Psoas muscle (tissue), 8 donors: ENCODE measurements at regions of chr16 and their contacts with region 1.

Region 1: GRCh38 chr16:85821441-85822135 is 22.1 kb downstream of the COX4I1 start:
- DNase-seq: peak; percentile 66 to 86
- ATAC-seq: peak; percentile 76 to 90 (median 87)
- H3K4me3 ChIP-seq: no peak overlapping the region
- H3K27ac ChIP-seq: no peak overlapping the region
- H3K4me1 ChIP-seq: no peaks in the 10 kb centered on the region
- H3K27me3 ChIP-seq: peaks cover 0 to 36% (median 6%) of the 10 kb centered on the region in 3 donors
- CTCF ChIP-seq: peak; percentile 96

Region 2: DNA sequence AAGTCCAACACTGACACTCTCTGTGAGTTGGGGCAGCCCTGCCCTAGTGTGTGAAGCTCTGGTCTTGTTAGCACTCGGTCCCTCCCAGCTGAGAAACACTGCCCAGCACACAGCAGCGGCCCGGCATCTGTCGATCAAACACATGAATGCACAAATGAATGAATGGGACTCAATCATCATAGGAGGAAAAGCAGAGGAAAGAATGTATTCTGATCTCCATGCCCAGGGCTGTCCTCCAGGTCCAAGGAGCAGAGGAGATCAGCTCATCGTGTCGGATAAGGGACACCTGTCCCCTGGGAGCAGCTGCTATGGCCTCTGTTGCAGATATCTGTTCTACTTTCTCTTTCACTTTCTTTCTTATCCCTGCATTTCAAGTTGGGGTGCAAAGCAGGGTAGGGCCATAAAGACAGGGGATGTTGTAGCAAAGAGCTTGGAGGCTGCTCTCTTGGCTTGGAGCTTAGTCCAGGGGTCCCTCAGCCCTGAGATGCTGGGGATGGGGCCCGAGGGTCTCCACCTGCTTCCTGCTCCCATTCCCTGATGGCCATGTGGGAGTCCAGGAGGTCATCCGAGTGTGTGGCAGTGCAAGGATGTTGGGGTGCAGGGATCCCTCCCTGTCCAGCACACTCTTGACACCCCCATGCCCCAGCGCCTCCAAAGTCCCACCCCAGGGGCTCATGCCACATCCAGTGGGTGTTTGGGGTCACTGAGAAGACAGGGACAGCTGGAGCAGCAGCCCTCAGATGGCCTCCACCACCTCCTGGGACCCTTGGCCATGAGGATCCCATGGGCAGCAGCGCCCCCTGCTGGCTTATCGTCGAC is 165.6 kb after region 1 on chr16:
- intact Hi-C with region 1: loop called in 1 of 2 experiments (anchors 10 kb)
- DNase-seq: no peak
- ATAC-seq: no peak
- H3K4me3 ChIP-seq: no peak overlapping the region
- H3K27ac ChIP-seq: no peak overlapping the region
- H3K4me1 ChIP-seq: no peaks in the 10 kb centered on the region
- H3K27me3 ChIP-seq: peaks cover 0 to 53% (median 10%) of the 10 kb centered on the region in 3 donors
- CTCF ChIP-seq: peak; percentile 10

Region 3: DNA sequence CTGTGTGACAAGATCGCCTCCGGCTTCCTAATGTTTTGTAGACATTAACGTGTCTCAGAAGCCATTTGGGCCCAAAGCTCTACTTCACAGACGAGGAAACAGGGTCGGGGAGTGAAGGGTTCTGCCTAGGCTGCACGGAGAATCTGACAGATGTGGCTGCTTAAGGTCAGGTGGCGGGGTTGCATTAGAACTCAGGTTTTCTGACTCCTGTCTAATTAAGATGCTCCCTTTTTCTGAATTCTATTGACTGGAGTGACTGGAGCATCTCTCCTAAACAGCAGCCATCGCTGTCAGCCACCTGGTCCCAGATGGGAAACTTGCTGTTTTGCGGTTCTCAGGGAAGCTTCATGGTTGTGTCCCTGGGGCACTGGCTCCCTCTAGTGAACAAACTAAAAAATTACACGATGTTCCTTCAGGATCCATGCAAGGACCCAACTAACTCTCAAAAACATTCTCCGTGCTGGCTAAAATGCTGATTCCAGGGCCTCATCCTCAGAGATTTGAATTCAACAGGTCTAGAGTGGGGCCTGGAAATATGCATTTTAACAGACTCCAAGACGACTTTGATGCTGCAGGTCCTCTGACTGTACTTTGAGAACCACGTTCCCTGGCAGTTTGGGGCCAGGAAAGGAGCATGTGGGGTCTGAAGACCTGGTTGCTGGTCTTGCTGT is 194.7 kb after region 1 on chr16:
- intact Hi-C with region 1: loop called (anchors 1 to 2 kb)
- DNase-seq: no peak
- ATAC-seq: peak in 1 of 4 donors; percentile 49
- H3K4me3 ChIP-seq: no peak overlapping the region
- H3K27ac ChIP-seq: no peak overlapping the region
- H3K4me1 ChIP-seq: no peaks in the 10 kb centered on the region
- H3K27me3 ChIP-seq: peaks cover 0 to 6% (median 0%) of the 10 kb centered on the region in 3 donors
- CTCF ChIP-seq: peak; percentile 59